A673 (cell line): ENCODE measurements at regions of chr14 and their contacts with region 1.

Region 1: GRCh38 chr14:98077176-98077575 is 1194.8 kb downstream of the BCL11B start:
- DNase-seq: no peak
- H3K4me3 ChIP-seq: no peak overlapping the region
- H3K27ac ChIP-seq: no peak overlapping the region
- H3K4me1 ChIP-seq: no peaks in the 10 kb centered on the region
- H3K27me3 ChIP-seq: no peaks in the 10 kb centered on the region
- CTCF ChIP-seq: no peak

Region 2: GRCh38 chr14:97499792-97500495 is 577.2 kb before region 1 on chr14:
- CTCF ChIA-PET with region 1: interaction called, 11 read pairs
- POLR2A ChIA-PET with region 1: no interaction called
- intact Hi-C with region 1: no loop called
- DNase-seq: no peak
- H3K4me3 ChIP-seq: no peak overlapping the region
- H3K27ac ChIP-seq: no peak overlapping the region
- H3K4me1 ChIP-seq: no peaks in the 10 kb centered on the region
- H3K27me3 ChIP-seq: no peaks in the 10 kb centered on the region
- CTCF ChIP-seq: no peak

Region 3: DNA sequence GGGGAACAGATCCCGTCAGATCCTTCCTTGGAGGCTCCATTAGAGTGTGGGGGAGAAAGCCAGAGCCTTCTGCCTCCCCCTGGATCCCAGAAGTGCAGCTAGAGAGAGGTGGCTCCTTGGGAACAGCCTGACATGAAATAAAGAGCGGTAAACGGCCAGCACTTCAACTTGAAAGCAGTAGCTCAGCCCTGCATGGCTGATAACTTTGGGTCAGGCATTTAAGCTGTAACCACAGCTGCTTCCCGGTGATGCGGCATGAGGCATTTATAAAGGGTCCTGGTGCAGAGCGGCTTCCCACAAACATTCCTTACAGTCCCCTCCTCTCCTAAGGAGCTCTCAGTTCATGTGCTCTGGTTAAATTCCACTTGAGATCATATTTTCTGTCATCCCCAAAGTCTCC is 319.7 kb before region 1 on chr14:
- CTCF ChIA-PET with region 1: no interaction called
- POLR2A ChIA-PET with region 1: no interaction called
- intact Hi-C with region 1: no loop called
- DNase-seq: no peak
- H3K4me3 ChIP-seq: no peak overlapping the region
- H3K27ac ChIP-seq: no peak overlapping the region
- H3K4me1 ChIP-seq: no peaks in the 10 kb centered on the region
- H3K27me3 ChIP-seq: no peaks in the 10 kb centered on the region
- CTCF ChIP-seq: no peak

Region 4: GRCh38 chr14:98252820-98253219 is 175.6 kb after region 1 on chr14:
- CTCF ChIA-PET with region 1: no interaction called
- POLR2A ChIA-PET with region 1: no interaction called
- intact Hi-C with region 1: no loop called
- DNase-seq: no peak
- H3K4me3 ChIP-seq: no peak overlapping the region
- H3K27ac ChIP-seq: no peak overlapping the region
- H3K4me1 ChIP-seq: no peaks in the 10 kb centered on the region
- H3K27me3 ChIP-seq: no peaks in the 10 kb centered on the region
- CTCF ChIP-seq: no peak